Esophagus muscularis mucosa (tissue), 4 donors: ENCODE measurements at regions of chr3 and their contacts with region 1.

Region 1: DNA sequence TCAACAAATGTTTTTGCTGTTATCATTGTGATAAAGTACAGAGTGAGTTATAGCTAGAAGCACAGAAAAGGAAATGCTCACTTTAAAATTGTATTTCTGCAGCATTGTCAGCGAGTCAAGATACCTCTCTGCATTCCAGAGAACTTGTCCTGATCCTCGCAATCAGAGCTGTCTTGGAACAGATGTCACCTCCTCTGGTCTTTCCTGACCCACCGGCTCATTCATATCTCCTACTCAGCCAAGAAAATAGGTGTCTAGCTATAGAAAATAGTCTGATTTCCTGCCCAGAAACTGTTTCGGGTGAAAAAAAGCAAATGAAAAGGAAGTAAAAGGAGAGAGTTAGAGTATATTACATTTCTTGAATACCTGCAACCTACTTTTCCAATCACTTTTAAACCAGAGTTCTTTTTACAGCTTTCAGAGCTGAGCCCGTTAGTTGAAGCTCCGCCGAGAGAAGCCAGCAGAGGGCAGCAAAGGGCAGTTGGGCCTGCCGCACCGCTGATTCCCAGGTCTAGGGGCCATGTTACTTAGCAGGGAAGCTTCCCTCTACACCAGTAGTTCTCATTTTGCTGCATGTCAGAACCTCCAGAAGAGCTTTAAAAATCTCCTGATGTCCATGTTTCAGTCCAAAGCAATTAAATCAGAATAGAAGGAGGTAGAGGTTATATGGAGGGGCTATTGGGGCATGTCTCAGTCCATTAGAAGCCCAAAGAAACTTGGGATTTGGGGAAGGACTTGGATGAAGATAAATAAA is 185.7 kb upstream of the THRB start:
- DNase-seq: no peak
- H3K4me3 ChIP-seq: no peak overlapping the region
- H3K27ac ChIP-seq: no peak overlapping the region
- H3K4me1 ChIP-seq: peaks cover 0 to 19% (median 6%) of the 10 kb centered on the region in 4 donors
- H3K27me3 ChIP-seq: no peaks in the 10 kb centered on the region
- CTCF ChIP-seq: peak; percentile 59 to 86 (median 66)
- EP300 ChIP-seq: no peak
- POLR2A ChIP-seq: no peak

Region 2: GRCh38 chr3:24004171-24004938 is 676.0 kb before region 1 on chr3:
- intact Hi-C with region 1: loop called (anchors 5 kb)
- DNase-seq: peak; percentile 19
- H3K4me3 ChIP-seq: no peak overlapping the region
- H3K27ac ChIP-seq: no peak overlapping the region
- H3K4me1 ChIP-seq: peaks cover 0 to under 1% (median 0%) of the 10 kb centered on the region in 4 donors
- H3K27me3 ChIP-seq: no peaks in the 10 kb centered on the region
- CTCF ChIP-seq: no peak
- EP300 ChIP-seq: no peak
- POLR2A ChIP-seq: no peak

Region 3: GRCh38 chr3:24185738-24186384 is 494.5 kb before region 1 on chr3:
- intact Hi-C with region 1: loop called (anchors 10 kb)
- DNase-seq: no peak
- H3K4me3 ChIP-seq: no peak overlapping the region
- H3K27ac ChIP-seq: peak overlapping the region in 1 of 4 donors; percentile 10
- H3K4me1 ChIP-seq: peaks cover 9 to 18% (median 10%) of the 10 kb centered on the region in 4 donors
- H3K27me3 ChIP-seq: no peaks in the 10 kb centered on the region
- CTCF ChIP-seq: peak; percentile 52 to 62 (median 53)
- EP300 ChIP-seq: no peak
- POLR2A ChIP-seq: no peak

Region 4: GRCh38 chr3:24264748-24265158 is 415.6 kb before region 1 on chr3:
- intact Hi-C with region 1: loop called (anchors 5 kb)
- DNase-seq: no peak
- H3K4me3 ChIP-seq: no peak overlapping the region
- H3K27ac ChIP-seq: no peak overlapping the region
- H3K4me1 ChIP-seq: peaks cover 18 to 28% (median 23%) of the 10 kb centered on the region in 4 donors
- H3K27me3 ChIP-seq: no peaks in the 10 kb centered on the region
- CTCF ChIP-seq: peak; percentile 62 to 76 (median 73)
- EP300 ChIP-seq: no peak
- POLR2A ChIP-seq: no peak